Endothelial cell of umbilical vein (primary cell): ENCODE measurements at regions of chr16 and their contacts with region 1.

Region 1: DNA sequence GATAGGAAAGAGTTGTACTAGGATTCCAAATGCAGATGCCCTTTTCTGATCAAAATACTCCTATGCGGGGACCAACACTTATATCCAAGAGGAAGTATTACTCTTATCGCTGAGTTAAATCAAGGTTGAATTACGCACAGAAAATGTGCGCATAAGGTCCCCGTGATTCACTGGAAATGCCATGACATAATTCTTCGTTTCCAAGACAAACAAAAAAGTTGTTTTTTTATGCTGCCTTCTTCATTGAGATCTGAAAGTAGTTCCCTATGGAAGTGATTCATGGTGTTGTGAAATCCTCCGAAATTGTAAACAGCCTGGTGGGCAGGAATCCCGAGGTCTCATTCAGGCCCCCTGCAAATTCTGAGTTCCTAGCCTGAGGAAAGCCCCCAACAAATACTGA is 463.8 kb upstream of the HSBP1 start:
- DNase-seq: peak; percentile 98
- H3K4me3 ChIP-seq: peak overlapping the region in 1 of 3 experiments; percentile 4
- H3K27ac ChIP-seq: peak overlapping the region; percentile 97
- H3K4me1 ChIP-seq: peaks cover 28% of the 10 kb centered on the region
- H3K27me3 ChIP-seq: no peaks in the 10 kb centered on the region
- CTCF ChIP-seq: no peak
- POLR2A ChIP-seq: peak; percentile 37

Region 2: DNA sequence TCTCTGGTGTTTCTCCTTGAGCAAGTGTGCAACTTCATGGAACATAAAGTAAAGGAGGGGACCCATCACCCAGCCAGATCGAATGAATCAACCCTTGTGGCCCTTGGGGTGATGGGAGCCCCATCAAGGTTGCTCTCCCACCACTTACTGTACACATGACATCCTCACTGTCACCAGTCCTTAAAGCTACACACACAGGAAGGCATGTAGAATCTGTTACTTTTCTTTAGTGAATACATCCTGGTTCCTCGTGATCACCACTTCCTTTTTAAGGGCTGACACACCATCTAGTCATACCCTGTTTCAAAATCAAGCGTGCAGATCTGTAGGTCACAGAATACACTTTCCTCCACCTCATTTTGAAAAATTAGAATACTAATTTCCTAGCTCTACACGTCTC is 1151.3 kb before region 1 on chr16:
- CTCF ChIA-PET with region 1: no interaction called
- POLR2A ChIA-PET with region 1: interaction called, 3 read pairs
- dilution Hi-C with region 1: no loop called
- intact Hi-C with region 1: loop called (anchors 10 kb)
- DNase-seq: peak; percentile 86
- H3K4me3 ChIP-seq: no peak overlapping the region
- H3K27ac ChIP-seq: peak overlapping the region; percentile 59
- H3K4me1 ChIP-seq: peaks cover 30% of the 10 kb centered on the region
- H3K27me3 ChIP-seq: no peaks in the 10 kb centered on the region
- CTCF ChIP-seq: no peak
- POLR2A ChIP-seq: peak; percentile 56

Region 3: GRCh38 chr16:82699711-82700495 is 644.1 kb before region 1 on chr16:
- CTCF ChIA-PET with region 1: no interaction called
- POLR2A ChIA-PET with region 1: no interaction called
- dilution Hi-C with region 1: no loop called
- intact Hi-C with region 1: loop called (anchors 2 kb)
- DNase-seq: peak; percentile 96
- H3K4me3 ChIP-seq: no peak overlapping the region
- H3K27ac ChIP-seq: peak overlapping the region; percentile 76
- H3K4me1 ChIP-seq: peaks cover 46% of the 10 kb centered on the region
- H3K27me3 ChIP-seq: no peaks in the 10 kb centered on the region
- CTCF ChIP-seq: no peak
- POLR2A ChIP-seq: no peak

Region 4: GRCh38 chr16:83002351-83003334 is 341.4 kb before region 1 on chr16:
- CTCF ChIA-PET with region 1: no interaction called
- POLR2A ChIA-PET with region 1: no interaction called
- dilution Hi-C with region 1: no loop called
- intact Hi-C with region 1: loop called (anchors 2 kb)
- DNase-seq: peak; percentile 88
- H3K4me3 ChIP-seq: no peak overlapping the region
- H3K27ac ChIP-seq: peak overlapping the region; percentile 73
- H3K4me1 ChIP-seq: peaks cover 36% of the 10 kb centered on the region
- H3K27me3 ChIP-seq: no peaks in the 10 kb centered on the region
- CTCF ChIP-seq: no peak
- POLR2A ChIP-seq: peak; percentile 49

Region 5: DNA sequence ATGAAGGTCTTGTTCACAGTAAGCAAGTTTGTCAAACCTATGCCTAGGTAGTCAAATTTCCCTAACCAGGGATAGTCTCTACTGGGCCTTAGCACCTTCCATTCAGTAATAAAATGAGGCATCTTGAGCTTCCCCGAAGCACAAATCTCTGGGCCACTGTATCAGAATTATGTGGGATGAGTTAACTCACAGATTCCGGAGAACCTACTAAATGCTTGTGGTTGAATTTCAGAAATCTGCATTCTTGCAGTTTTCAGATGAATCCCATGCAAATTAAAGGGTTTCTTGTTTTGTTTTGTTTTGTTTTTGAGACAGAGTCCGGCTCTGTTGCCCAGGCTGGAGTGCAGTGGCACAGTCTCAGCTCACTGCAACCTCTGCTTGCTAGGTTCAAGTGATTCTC is 15.1 kb before region 1 on chr16:
- CTCF ChIA-PET with region 1: no interaction called
- POLR2A ChIA-PET with region 1: no interaction called
- dilution Hi-C with region 1: no loop called
- intact Hi-C with region 1: no loop called
- DNase-seq: no peak
- H3K4me3 ChIP-seq: no peak overlapping the region
- H3K27ac ChIP-seq: no peak overlapping the region
- H3K4me1 ChIP-seq: no peaks in the 10 kb centered on the region
- H3K27me3 ChIP-seq: no peaks in the 10 kb centered on the region
- CTCF ChIP-seq: no peak
- POLR2A ChIP-seq: no peak

Region 6: GRCh38 chr16:83356266-83356665 is 12.3 kb after region 1 on chr16:
- CTCF ChIA-PET with region 1: interaction called, 8 read pairs
- POLR2A ChIA-PET with region 1: no interaction called
- dilution Hi-C with region 1: no loop called
- intact Hi-C with region 1: loop called (anchors 1 kb)
- DNase-seq: peak; percentile 70
- H3K4me3 ChIP-seq: no peak overlapping the region
- H3K27ac ChIP-seq: no peak overlapping the region
- H3K4me1 ChIP-seq: no peaks in the 10 kb centered on the region
- H3K27me3 ChIP-seq: no peaks in the 10 kb centered on the region
- CTCF ChIP-seq: peak; percentile 72 to 74
- POLR2A ChIP-seq: no peak

Region 7: DNA sequence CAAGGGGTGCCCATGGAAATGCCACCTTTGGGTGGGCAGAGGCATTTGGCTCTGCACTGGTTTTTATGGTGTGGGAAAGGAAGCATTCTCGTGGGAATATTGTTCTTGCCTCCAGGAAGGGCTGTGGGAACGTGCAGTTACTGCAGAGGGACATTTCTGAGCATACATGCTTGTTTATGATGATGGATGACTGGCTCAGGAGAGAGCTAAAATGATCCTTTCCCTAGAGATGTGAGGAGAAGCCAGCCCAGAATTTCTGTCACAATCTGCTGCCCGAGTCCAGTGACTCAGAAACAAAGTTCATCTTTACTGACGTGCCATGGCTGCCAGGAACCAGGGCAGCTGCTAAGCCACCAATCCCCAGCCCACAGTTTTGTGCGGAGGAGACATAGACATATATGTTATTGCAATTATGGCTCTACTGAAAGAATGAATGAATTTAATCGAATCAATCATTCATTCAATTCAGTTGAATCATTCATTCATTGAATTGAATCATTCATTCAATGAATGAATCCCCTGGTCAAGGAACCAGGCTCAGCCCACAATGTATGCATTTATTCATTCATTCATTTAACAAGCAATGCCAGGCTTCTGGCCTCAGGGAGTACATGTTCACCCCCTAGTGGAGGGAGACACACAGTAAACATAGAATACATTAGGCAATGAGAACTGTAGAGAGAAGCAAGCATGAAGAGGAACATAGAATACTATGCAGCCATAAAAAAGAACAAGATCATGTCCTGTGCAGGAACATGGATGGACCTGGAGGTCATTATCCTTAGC is 49.4 kb after region 1 on chr16:
- CTCF ChIA-PET with region 1: no interaction called
- POLR2A ChIA-PET with region 1: no interaction called
- dilution Hi-C with region 1: no loop called
- intact Hi-C with region 1: no loop called
- DNase-seq: no peak
- H3K4me3 ChIP-seq: no peak overlapping the region
- H3K27ac ChIP-seq: no peak overlapping the region
- H3K4me1 ChIP-seq: no peaks in the 10 kb centered on the region
- H3K27me3 ChIP-seq: no peaks in the 10 kb centered on the region
- CTCF ChIP-seq: no peak
- POLR2A ChIP-seq: no peak

Region 8: GRCh38 chr16:83403761-83404160 is 59.7 kb after region 1 on chr16:
- CTCF ChIA-PET with region 1: no interaction called
- POLR2A ChIA-PET with region 1: no interaction called
- dilution Hi-C with region 1: no loop called
- intact Hi-C with region 1: no loop called
- DNase-seq: no peak
- H3K4me3 ChIP-seq: no peak overlapping the region
- H3K27ac ChIP-seq: no peak overlapping the region
- H3K4me1 ChIP-seq: peaks cover 13% of the 10 kb centered on the region
- H3K27me3 ChIP-seq: no peaks in the 10 kb centered on the region
- CTCF ChIP-seq: no peak
- POLR2A ChIP-seq: no peak